Posterior vena cava (tissue), 2 donors: ENCODE measurements at regions of chr2 and their contacts with region 1.

Region 1: DNA sequence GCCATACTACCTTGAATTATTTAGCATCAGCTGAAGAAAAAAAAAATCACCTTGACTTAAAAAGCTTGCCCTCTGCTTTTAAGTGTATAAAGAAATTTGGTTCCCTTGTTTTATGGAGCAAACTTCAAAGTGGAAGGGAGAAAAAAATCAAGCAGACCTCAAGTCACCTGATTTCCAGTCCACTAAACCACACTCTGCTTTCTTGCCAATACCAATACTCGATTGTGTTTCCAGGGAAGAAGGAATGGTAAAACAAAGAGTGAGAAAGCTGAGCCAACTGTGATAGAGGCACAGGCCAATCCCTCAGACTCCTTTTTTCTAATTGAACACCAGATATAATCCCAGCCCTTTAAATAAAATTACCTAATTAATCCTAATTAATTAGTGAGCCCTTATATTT is 587.3 kb downstream of the ARHGAP15 start:
- DNase-seq: no peak

Region 2: DNA sequence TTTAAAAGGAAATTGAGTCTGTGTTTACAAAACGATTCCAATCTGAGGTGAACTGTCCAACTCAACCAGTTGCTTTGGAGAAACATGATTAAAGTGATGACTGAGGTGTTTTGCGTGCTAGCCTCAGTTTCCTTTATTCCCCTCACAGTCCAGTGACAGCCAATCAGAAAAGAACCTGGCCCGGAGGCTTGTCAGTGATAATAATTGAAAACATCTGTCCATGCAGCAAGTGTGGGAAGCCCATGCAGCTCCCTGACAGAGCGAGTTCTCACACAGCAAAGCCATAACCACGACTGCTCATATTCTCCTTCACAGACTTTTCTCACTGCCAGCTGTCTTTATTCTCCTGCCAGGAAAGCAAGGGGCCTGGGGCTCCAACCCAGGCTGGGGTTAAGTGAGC is 26.1 kb after region 1 on chr2:
- intact Hi-C with region 1: loop called in 1 of 2 experiments (anchors 1 kb)
- DNase-seq: no peak

Region 3: GRCh38 chr2:143839456-143839855 is 122.9 kb after region 1 on chr2:
- intact Hi-C with region 1: no loop called
- DNase-seq: no peak